B cell (primary cell): ENCODE measurements at regions of chr1 and their contacts with region 1.

Region 1: GRCh38 chr1:86596741-86597290 is 49.9 kb downstream of the CLCA4 start:
- DNase-seq: no peak
- ATAC-seq: no peak
- H3K4me3 ChIP-seq: no peak overlapping the region
- H3K4me3 Mint-ChIP-seq: no peak overlapping the region
- H3K27ac ChIP-seq: no peak overlapping the region
- H3K27ac Mint-ChIP-seq: no peak overlapping the region
- H3K4me1 ChIP-seq: no peaks in the 10 kb centered on the region
- H3K4me1 Mint-ChIP-seq: no peaks in the 10 kb centered on the region
- H3K27me3 ChIP-seq: no peaks in the 10 kb centered on the region
- H3K27me3 Mint-ChIP-seq: peaks cover 1% of the 10 kb centered on the region
- CTCF ChIP-seq: no peak

Region 2: DNA sequence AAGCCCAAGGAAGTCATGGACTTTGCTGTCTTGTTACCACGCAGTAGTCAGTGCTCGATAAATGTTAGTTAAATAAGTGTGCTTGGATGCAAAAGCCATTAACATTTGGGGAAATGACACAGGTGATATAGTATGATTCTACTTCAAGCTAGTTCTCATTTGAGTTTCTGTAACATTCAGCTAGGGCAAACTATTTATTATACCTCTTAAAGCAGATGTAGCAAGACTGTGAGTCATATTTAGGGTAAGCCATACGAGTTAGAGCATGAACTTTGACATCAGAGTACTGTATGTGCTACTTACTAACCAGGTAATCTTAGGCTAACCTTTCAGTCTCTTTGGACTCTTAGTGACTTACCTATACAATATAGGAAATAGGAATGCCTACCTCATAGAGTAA is 28.9 kb before region 1 on chr1:
- CTCF ChIA-PET with region 1: no interaction called
- POLR2A ChIA-PET with region 1: no interaction called
- intact Hi-C with region 1: loop called (anchors 5 kb)
- DNase-seq: no peak
- ATAC-seq: no peak
- H3K4me3 ChIP-seq: no peak overlapping the region
- H3K4me3 Mint-ChIP-seq: no peak overlapping the region
- H3K27ac ChIP-seq: no peak overlapping the region
- H3K27ac Mint-ChIP-seq: no peak overlapping the region
- H3K4me1 ChIP-seq: no peaks in the 10 kb centered on the region
- H3K4me1 Mint-ChIP-seq: no peaks in the 10 kb centered on the region
- H3K27me3 ChIP-seq: no peaks in the 10 kb centered on the region
- H3K27me3 Mint-ChIP-seq: peaks cover 11% of the 10 kb centered on the region
- CTCF ChIP-seq: no peak